PC-9 (cell line): ENCODE measurements at regions of chr7 and their contacts with region 1.

Region 1: GRCh38 chr7:106767498-106768323 is 97.4 kb upstream of the PIK3CG start:
- DNase-seq: no peak
- H3K4me3 ChIP-seq: no peak overlapping the region
- H3K27ac ChIP-seq: no peak overlapping the region
- H3K4me1 ChIP-seq: peaks cover 29% of the 10 kb centered on the region
- H3K27me3 ChIP-seq: no peaks in the 10 kb centered on the region
- CTCF ChIP-seq: no peak

Region 2: DNA sequence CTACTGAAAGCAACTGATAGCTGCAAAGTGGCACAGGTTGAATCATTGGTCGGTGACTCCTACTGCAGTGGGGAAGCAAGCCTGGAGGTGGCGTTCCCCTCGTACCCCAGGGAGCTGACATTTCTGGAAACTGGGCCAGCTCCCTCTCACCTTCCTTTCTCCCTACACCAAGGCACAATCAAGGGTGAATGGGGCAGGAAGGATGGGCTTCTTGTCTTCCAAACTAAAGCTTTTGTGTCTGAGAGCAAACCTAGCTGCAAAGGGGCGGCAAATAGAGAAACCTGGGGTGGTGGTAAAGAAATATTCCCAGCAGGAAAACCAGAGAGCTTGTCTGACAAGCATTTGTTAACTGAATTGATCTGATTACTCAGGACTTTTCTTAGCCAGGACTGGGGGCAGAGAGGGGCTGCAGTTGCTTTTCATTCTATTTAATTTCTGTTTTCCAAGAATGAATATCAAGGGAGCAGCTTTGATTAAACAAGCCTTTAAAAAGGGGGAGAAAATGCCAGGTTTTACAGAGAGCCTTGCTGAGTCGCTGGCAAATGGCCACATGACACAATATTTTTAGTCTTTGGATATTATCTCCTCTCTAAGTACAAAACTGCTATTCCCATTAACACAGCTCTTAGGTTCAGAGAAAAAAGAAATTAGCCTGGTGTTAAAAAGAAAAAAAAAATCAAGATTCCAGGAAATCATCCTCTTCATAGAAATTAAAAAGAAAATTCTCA is 776.8 kb before region 1 on chr7:
- CTCF ChIA-PET with region 1: no interaction called
- POLR2A ChIA-PET with region 1: no interaction called
- intact Hi-C with region 1: no loop called
- DNase-seq: no peak
- H3K4me3 ChIP-seq: no peak overlapping the region
- H3K27ac ChIP-seq: no peak overlapping the region
- H3K4me1 ChIP-seq: no peaks in the 10 kb centered on the region
- H3K27me3 ChIP-seq: peaks cover 10% of the 10 kb centered on the region; the same call in 1 of the 2 replicates
- CTCF ChIP-seq: no peak

Region 3: DNA sequence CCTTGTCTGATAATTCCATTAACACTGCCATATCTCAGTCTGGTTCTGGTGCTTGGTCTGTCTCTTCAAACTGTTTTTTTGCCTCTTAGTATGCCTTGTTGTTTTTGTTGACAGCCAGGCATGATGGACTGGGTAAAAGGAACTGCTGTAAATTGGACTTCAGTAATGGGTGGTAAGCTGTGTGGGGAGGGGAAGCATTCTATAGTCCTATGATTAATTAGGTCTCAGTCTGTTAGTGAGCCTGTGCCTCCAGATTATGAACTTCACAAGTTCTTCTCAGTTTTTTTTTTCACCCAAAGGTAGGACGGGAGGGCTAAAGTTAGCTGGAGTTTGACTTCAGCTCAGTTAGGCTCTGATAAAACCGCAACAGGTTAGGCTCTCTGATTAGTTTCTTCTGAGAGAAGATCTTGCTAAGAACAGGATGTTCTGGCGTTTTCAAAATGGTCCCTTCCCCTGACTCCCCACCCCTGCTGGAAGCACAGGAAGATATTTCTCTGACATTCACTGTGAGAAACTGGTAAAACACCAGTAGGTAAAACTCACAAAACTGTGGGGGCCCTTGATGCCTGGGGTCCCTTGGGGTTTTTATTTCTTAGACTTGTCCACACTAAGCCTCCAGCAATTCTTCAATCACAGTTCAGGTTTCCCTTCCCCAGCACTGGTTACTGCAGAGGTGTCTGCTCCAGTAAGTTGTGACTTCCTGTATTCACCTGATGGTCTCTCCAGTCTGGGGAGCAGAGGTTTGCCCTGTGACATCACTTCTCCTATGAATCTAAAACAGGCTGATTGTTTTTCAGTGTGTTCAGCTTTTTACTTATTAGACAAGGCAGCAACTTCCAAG is 63.5 kb before region 1 on chr7:
- CTCF ChIA-PET with region 1: no interaction called
- POLR2A ChIA-PET with region 1: interaction called, 12 read pairs
- intact Hi-C with region 1: no loop called
- DNase-seq: no peak
- H3K4me3 ChIP-seq: no peak overlapping the region
- H3K27ac ChIP-seq: no peak overlapping the region
- H3K4me1 ChIP-seq: no peaks in the 10 kb centered on the region
- H3K27me3 ChIP-seq: no peaks in the 10 kb centered on the region
- CTCF ChIP-seq: no peak

Region 4: GRCh38 chr7:106736508-106737201 is 31.1 kb before region 1 on chr7:
- CTCF ChIA-PET with region 1: interaction called, 7 read pairs
- POLR2A ChIA-PET with region 1: interaction called, 13 read pairs
- intact Hi-C with region 1: no loop called
- DNase-seq: peak; percentile 33 to 58
- H3K4me3 ChIP-seq: no peak overlapping the region
- H3K27ac ChIP-seq: peak overlapping the region; percentile 2
- H3K4me1 ChIP-seq: no peaks in the 10 kb centered on the region
- H3K27me3 ChIP-seq: no peaks in the 10 kb centered on the region
- CTCF ChIP-seq: peak; percentile 66

Region 5: DNA sequence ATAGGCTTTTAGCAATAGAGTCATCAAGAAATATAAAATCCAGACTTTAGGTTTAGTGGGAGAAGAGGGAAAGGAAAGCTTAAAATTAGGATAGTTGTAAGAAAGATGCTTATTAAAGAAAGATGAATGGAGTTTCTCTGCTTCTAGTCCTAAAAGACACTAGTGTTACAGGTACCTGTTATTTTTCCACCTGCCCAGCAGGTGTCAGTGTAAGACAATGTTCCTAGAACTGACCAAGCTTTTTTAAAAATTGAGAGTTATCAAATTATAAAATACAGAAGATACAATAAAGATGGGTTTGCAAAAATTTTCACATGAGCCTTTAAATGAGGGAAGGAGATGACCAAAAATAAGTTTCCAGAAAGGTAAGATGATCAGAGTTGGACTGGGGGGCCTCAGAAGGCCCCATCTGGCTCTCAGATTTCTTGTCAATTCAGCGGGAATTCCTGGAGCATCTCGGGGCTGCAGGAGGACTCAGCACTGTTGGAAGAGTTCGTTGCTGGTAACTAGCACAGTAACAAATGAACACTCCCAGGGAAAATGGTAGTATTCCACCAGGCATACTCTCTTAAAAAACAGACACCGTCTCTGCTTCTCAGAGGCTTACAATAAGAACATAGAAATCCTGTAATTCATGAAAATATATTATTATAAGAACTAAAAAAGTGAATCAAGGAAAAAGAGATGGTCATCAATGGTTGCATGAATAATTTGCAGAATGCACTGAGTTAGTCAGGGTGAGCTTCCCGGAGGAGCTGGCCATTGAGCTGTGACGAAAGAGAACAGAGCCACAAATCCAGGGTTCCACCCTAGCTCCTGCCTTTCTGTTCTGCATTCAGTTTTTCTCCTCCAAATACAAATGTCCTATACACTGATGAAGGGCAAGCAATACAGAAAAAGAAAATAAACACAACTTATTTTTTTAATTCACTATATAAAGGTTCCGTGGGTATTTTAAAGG is 25.6 kb after region 1 on chr7:
- CTCF ChIA-PET with region 1: no interaction called
- POLR2A ChIA-PET with region 1: no interaction called
- intact Hi-C with region 1: no loop called
- DNase-seq: no peak
- H3K4me3 ChIP-seq: no peak overlapping the region
- H3K27ac ChIP-seq: no peak overlapping the region
- H3K4me1 ChIP-seq: no peaks in the 10 kb centered on the region
- H3K27me3 ChIP-seq: no peaks in the 10 kb centered on the region
- CTCF ChIP-seq: peak; percentile 87